ENCODE measurements at regions of chr9 and their contacts with region 1.

Region 1: DNA sequence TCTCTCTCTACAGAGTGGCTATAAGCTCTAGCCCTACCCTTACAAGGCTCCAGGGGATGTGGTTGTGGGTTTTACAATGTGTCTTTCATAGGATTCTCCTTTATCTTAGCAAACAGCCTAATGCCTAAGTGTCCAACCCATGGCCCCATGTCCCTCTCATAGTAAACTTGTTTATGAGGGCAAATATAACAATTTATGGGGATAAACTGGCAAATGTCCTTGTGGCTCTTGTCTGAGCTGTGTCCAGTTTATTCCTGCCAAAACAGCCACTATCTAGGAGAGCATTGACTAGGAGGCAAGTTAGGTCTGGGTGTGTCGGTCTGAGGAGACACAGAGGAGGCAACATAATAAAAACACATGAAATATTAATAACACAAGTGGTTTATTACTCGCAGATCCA is 335.1 kb downstream of the IZUMO3 start:
- DNase-seq: no peak

Region 2: GRCh38 chr9:24132244-24132643 is 78.4 kb before region 1 on chr9:
- intact Hi-C with region 1: loop called in 1 of 2 experiments (anchors 2 kb)
- DNase-seq: no peak

Region 3: DNA sequence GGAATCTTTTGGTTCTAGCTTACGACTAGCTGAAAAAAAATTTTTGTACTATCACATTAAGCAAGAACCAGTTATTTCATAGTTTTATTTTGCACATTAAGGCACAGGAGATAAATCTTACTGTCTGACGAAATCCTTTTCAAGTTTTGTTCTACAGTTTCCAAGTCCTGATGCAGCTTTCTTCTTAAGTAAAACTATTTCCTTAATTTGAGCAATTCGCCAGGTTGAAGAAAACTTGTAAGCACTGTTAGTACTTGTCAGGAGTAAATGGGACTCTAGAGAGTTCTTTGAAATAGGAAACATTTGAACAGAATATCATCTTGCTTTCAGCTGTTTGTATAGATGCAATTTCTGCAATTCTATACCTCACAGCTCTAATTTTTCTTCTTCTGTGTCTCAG is 65.8 kb before region 1 on chr9:
- intact Hi-C with region 1: no loop called
- DNase-seq: no peak

Region 4: DNA sequence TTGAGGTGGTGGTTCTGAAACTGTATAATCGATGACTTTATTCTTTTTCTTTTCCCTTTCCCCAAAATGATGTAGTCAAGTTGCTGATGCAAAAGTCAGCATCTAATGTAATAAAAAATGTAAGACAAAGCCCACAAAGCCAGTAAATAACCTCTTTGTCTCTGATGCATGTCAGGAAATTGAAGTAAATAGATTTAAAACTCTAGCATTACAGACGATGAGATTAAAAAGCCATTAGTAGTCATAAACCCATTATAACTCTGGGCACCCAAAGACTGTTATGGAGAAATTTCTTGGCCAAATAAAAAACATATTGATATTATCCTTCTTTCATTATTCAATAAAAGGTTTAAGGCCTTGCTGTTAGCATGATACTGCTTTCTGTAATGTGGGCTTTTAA is 918.9 kb after region 1 on chr9:
- intact Hi-C with region 1: no loop called
- DNase-seq: no peak

Measured in posterior vena cava (tissue), 2 donors.